Aorta (tissue), 5 donors: ENCODE measurements at regions of chr12 and their contacts with region 1.

Region 1: GRCh38 chr12:92570056-92570753 is 132.6 kb upstream of the PLEKHG7 start:
- DNase-seq: no peak
- ATAC-seq: peak; percentile 88
- H3K4me3 ChIP-seq: no peak overlapping the region
- H3K27ac ChIP-seq: no peak overlapping the region
- H3K4me1 ChIP-seq: no peaks in the 10 kb centered on the region
- H3K27me3 ChIP-seq: no peaks in the 10 kb centered on the region

Region 2: DNA sequence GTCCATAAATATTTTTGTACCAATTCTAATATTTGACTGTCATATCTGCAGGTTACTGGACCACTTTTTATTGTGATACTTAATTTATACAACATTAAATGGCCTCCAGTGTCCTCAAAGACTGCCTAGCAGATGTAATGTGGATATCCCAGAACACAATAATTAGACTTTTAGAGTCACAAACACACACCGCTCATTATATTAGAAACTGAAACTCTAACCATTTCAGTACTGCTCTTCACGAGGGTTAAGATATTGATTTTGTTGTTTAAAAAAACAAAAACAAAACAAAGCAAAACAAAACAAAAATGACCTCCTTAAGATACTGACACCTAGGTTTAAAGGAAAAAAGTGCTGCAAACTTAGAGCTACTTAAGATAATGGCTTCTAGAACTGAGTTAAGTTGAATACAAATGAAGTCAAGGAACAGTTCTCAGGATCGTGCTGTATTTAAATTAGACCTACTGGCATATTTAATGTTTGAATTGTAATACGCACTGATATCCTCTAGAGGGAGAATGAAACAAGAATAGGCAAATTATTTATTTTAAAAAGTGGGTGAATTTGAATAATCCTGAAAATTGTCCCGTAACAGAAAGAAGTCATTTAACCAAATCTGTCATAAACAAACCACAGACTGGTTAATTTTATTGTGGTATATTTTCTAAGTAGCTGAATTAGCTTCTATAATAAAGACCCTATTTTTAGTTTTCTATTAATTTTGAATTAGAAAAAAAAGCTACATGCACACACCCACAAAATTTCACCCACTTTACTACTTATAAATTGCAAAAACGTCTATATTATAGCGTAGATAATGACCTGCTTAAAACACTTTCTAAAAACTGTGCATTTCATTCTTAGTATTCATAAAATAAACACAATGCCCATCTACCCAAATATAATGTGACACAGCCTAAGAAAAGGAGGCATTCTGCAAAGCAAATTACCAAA is 992.3 kb before region 1 on chr12:
- intact Hi-C with region 1: loop called in 1 of 2 experiments (anchors 10 kb)
- DNase-seq: no peak
- ATAC-seq: no peak
- H3K4me3 ChIP-seq: no peak overlapping the region
- H3K27ac ChIP-seq: no peak overlapping the region
- H3K4me1 ChIP-seq: no peaks in the 10 kb centered on the region
- H3K27me3 ChIP-seq: no peaks in the 10 kb centered on the region

Region 3: GRCh38 chr12:92457458-92458180 is 112.6 kb before region 1 on chr12:
- intact Hi-C with region 1: no loop called
- DNase-seq: no peak
- ATAC-seq: no peak
- H3K4me3 ChIP-seq: no peak overlapping the region
- H3K27ac ChIP-seq: no peak overlapping the region
- H3K4me1 ChIP-seq: no peaks in the 10 kb centered on the region
- H3K27me3 ChIP-seq: no peaks in the 10 kb centered on the region

Region 4: GRCh38 chr12:92629349-92630065 is 59.3 kb after region 1 on chr12:
- intact Hi-C with region 1: no loop called
- DNase-seq: no peak
- ATAC-seq: no peak
- H3K4me3 ChIP-seq: no peak overlapping the region
- H3K27ac ChIP-seq: no peak overlapping the region
- H3K4me1 ChIP-seq: no peaks in the 10 kb centered on the region
- H3K27me3 ChIP-seq: no peaks in the 10 kb centered on the region